MCF 10A (cell line): ENCODE measurements at regions of chr11 and their contacts with region 1.

Region 1: DNA sequence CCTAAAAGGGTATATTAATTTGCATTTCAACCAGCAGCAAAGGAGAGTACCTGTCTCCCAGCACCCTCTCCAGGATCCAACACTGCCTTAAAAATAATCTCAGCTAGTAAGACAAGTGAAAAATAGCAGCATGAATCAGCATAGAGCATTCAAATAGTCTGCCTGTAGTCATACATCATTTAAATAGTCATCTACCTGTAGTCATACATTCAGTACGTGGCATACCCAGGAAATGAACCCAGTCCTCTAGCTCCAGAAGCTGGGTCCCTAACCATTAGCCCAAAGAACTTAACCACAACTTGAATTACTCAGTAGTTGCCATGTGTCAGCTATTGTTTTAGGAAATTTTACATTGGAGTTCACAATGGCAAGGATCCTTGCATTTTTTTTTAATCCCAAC is 9.3 kb downstream of the TENM4 start:
- DNase-seq: peak; percentile 68
- H3K4me3 Mint-ChIP-seq: no peak overlapping the region
- H3K27ac Mint-ChIP-seq: peak overlapping the region; percentile 75
- H3K4me1 Mint-ChIP-seq: peaks cover 8% of the 10 kb centered on the region
- H3K27me3 Mint-ChIP-seq: no peaks in the 10 kb centered on the region
- CTCF ChIP-seq: no peak

Region 2: GRCh38 chr11:79413268-79413667 is 18.3 kb before region 1 on chr11:
- CTCF ChIA-PET with region 1: interaction called, 4 read pairs
- POLR2A ChIA-PET with region 1: interaction called, 14 read pairs
- intact Hi-C with region 1: no loop called
- DNase-seq: peak; percentile 91
- H3K4me3 Mint-ChIP-seq: no peak overlapping the region
- H3K27ac Mint-ChIP-seq: no peak overlapping the region
- H3K4me1 Mint-ChIP-seq: peaks cover 45% of the 10 kb centered on the region
- H3K27me3 Mint-ChIP-seq: no peaks in the 10 kb centered on the region
- CTCF ChIP-seq: no peak

Region 3: DNA sequence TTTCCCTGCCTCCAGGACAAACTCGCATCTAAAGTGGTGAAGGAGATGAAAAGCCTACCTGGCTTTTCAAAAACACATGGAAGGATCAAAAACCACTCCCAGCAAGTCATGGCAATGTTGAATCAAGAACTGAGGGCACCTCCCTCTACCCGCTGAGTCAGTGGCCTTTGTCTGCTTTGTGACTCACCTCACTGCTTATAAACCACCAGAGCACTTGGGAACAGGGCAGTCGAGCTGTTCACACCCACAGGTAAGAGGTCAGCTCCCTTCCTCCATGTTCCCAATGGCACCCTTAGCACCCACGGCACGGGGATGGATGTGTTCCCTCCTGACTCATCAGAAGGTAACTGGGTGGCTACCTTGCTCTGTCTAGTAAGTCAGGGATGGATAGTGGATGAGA is 12.4 kb before region 1 on chr11:
- CTCF ChIA-PET with region 1: interaction called, 17 read pairs
- POLR2A ChIA-PET with region 1: interaction called, 33 read pairs
- intact Hi-C with region 1: no loop called
- DNase-seq: peak; percentile 96
- H3K4me3 Mint-ChIP-seq: peak overlapping the region; percentile 16
- H3K27ac Mint-ChIP-seq: peak overlapping the region; percentile 80
- H3K4me1 Mint-ChIP-seq: peaks cover 45% of the 10 kb centered on the region
- H3K27me3 Mint-ChIP-seq: no peaks in the 10 kb centered on the region
- CTCF ChIP-seq: no peak